Heart right ventricle (tissue), 16 donors: ENCODE measurements at regions of chr6 and their contacts with region 1.

Region 1: DNA sequence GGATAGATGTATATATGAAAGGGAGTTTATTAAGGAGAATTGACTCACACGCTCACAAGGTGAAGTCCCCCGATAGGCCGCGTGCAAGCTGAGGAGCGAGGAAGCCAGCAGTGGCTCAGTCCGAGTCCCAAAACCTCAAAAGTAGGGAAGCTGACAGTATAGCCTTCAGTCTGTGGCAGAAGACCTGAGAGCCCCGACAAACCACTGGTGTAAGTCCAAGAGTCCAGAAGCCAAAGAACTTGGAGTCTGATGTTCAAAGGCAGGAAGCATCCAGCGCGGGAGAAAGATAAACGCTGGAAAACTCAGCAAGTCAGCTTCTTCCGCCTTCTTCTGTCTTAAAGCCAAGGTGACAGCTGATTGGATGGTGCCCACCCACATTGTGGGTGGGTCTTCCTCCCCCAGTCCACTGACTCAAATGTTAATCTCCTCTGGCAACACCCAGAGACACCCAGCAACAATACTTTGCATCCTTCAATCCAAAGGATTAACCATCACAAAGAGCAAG is 102.6 kb upstream of the GJE1 start:
- DNase-seq: no peak
- ATAC-seq: no peak
- H3K4me3 ChIP-seq: no peak overlapping the region
- H3K27ac ChIP-seq: no peak overlapping the region
- H3K4me1 ChIP-seq: no peaks in the 10 kb centered on the region
- H3K27me3 ChIP-seq: no peaks in the 10 kb centered on the region
- CTCF ChIP-seq: no peak

Region 2: GRCh38 chr6:142433419-142433818 is 403.3 kb after region 1 on chr6:
- intact Hi-C with region 1: loop called in 1 of 10 experiments (anchors 5 kb)
- DNase-seq: no peak
- ATAC-seq: no peak
- H3K4me3 ChIP-seq: no peak overlapping the region
- H3K27ac ChIP-seq: no peak overlapping the region
- H3K4me1 ChIP-seq: no peaks in the 10 kb centered on the region
- H3K27me3 ChIP-seq: no peaks in the 10 kb centered on the region
- CTCF ChIP-seq: no peak